ENCODE measurements at regions of chr17 and their contacts with region 1.

Region 1: DNA sequence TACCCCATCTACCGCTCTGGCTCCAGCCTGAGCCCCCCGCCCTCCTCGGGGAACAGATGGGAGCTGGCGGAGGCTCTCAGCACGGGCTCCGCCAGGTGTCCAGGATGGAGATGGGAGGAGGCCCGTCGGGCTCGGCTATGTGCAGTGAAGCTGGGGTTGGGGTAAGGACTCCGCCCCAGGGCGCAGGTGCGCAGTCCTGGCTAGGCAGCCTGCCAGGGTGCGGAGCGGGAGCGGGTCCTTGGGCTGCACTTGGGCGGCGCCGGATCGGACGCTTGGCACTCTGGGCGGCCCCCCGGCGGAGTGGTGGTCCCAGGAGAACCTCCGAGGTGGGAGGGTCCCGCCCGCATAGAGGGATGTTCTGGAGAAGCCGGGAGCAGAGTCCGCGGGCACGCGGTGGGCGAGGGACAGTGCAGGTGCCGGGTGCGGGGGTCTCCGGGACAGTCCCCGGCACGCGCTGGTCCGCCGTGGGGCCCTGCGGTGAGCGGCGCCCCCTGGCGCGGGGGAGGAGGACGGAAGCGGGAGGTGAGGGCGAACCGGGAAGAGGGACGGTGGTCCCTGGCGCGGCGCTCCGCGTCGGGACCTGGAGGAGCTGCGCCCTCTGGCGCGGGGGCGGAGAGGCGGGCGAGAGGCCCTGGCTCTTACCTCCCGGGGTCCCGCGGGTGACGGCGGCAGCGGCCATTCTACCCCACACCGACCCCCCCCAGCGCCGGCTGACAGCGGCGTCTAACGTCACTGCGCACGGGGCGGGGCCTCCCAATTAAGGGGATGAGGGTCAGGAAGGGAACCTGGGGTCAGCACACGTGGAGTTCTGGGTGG is at the start of gene CAMTA2:
- DNase-seq: peak; percentile 86 to 95 (median 90)
- ATAC-seq: peak; percentile 91 to 95 (median 92)
- H3K4me3 ChIP-seq: peak within 1 kb of the TSS; percentile 82 to 94 (median 84)
- H3K27ac ChIP-seq: peak within 1 kb of the TSS; percentile 82 to 96 (median 90)
- H3K4me1 ChIP-seq: peaks cover 0 to 16% (median 4%) of the 10 kb centered on the region in 3 donors
- H3K27me3 ChIP-seq: no peaks in the 10 kb centered on the region
- CTCF ChIP-seq: peak; percentile 37 to 64 (median 58)
- total RNA-seq, gene CAMTA2: 13.6 to 28.0 (median 19.8) TPM

Region 2: DNA sequence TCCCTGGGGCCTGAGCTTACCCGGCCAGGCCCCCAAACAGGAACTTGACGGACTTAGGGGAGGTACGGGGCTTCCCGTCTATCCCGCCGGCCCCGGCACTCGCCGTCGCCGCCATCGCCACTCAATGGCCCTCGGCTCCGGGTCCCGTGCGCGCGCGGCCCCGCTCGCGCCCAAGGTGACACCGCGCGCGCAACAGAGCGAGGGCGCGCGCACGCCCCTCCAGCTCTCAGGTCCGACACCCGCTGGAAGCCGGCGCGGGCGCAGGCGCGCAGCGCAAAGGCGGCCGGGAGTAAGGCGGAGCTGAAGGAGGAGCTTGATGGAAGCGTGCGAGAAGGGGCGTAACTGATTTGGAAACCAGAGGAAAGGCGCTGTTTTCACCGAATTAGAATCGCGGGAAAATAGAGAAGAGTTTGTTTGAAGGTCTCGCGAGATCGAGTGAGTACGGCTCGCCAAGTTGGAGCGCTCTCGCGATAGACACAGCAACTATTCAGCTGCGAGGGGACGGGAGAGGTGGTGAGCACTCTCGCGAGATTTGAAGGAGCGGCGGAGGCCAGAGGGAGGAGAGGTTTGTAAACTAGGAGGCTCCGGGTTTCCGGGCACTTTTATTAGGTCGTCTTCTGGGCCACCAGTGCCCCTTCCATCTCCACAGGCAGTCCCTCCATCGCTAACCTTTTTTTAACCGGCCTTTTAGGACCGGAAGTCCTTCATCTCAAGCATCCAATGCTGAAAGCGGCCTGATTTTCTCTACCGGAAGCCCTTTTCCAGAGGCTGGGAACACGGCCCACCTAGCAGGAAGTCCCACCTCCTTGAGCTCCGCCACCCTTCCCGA is 47.1 kb before region 1 on chr17 and contains the starts of genes RNF167 and SLC25A11:
- intact Hi-C with region 1: loop called in 1 of 3 experiments (anchors 10 kb)
- DNase-seq: peak; percentile 92 to 97 (median 94)
- ATAC-seq: peak; percentile 88 to 93 (median 92)
- H3K4me3 ChIP-seq: peak within 1 kb of the TSS; percentile 52 to 97 (median 80)
- H3K27ac ChIP-seq: peak within 1 kb of the TSS; percentile 73 to 91 (median 89)
- H3K4me1 ChIP-seq: peaks cover 5 to 25% (median 16%) of the 10 kb centered on the region in 3 donors
- H3K27me3 ChIP-seq: no peaks in the 10 kb centered on the region
- CTCF ChIP-seq: no peak
- total RNA-seq, gene RNF167: 40.8 to 64.5 (median 46.7) TPM
- total RNA-seq, gene SLC25A11: 10.9 to 23.3 (median 21.4) TPM

Region 3: GRCh38 chr17:5049314-5049895 is 62.2 kb after region 1 on chr17:
- intact Hi-C with region 1: no loop called
- DNase-seq: no peak
- ATAC-seq: peak in 1 of 4 donors; percentile 23
- H3K4me3 ChIP-seq: no peak overlapping the region
- H3K27ac ChIP-seq: peak overlapping the region in 2 of 4 donors; percentile 6 to 27
- H3K4me1 ChIP-seq: no peaks in the 10 kb centered on the region
- H3K27me3 ChIP-seq: no peaks in the 10 kb centered on the region
- CTCF ChIP-seq: no peak

Region 4: DNA sequence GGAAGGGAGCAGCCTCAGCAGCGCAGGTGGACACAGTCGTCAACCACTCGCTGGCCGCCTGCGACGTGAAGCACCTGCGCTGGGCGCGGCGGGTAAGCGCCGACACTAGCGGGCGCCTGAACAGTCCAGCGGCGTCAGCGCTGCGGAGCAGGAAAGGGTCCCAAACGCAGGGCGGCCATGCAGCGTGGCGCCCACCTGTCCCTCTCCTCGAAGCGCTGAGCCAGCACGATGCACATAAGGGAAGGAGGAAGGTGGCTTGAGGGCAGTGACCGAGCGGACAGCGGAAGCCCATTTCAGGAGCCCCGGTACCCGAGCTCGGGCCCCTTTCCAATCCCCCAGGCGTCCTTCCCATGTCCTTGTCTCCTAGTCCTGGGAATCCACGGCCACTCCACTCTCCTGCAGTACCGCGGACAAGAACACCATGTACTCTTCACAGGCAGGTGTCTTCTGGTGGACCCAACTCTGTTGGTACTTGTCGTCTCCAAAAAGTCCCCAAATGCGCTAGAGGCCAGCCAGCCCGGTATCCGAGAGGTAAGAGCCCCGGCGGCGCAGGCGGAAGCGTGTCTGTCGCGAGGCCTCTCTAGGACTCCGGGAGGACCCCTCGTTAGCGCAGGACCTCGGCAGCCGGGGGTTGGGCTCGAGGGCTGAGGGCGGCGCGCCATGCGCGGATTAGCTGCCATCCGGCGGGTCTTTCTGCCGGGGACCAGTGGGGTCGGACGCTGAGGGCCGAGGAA is 110.1 kb after region 1 on chr17:
- intact Hi-C with region 1: no loop called
- DNase-seq: peak; percentile 56 to 85 (median 74)
- ATAC-seq: peak; percentile 86 to 96 (median 88)
- H3K4me3 ChIP-seq: peak overlapping the region; percentile 6 to 53 (median 43)
- H3K27ac ChIP-seq: peak overlapping the region; percentile 3 to 68 (median 44)
- H3K4me1 ChIP-seq: no peaks in the 10 kb centered on the region
- H3K27me3 ChIP-seq: no peaks in the 10 kb centered on the region
- CTCF ChIP-seq: no peak

Measured in pancreas (tissue), 10 donors.